ENCODE measurements at regions of chr2 and their contacts with region 1.

Region 1: DNA sequence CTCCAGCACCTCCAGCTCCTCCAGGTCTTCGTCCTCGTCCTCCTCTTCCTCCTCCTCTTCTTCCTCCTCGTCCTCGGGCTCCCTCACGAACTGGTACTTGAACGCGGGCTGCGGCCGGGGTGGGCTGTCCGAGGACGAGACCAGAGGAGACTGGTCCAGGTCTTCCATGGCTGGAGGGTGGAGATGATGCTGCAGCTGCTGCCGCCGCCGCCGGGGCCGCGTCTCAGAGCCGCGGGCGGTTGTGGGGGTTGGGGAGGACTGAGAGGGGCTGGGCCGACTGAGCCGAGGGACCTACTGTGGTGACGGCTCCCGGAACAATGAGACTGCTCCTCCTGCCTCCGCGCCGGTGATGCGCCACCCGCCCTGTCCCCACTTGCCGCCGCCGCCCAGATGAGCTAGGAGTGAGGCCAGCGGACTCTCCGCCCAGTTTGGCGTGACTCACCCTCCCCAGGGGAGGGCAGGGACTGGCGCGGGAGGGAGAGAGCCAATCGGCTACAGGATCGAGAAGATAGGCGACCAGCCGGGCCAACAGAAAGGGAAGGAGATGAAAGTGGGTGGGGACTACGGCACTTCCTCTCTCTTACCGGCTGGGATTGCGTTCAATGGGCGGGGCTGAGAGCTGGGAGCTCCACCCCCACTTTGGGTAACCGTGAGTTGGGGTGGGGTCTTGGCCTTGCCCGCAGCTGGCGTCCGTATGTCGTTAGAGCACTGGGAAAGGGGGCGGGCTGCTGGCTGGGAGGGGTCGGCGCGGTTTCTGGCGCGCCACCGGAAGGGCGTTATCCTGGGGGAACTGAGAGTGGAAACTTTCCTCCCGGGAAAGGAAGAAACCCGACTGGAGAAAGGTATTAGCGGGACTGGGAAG is at the start of gene RTN4:
- DNase-seq: peak; percentile 99
- H3K4me3 Mint-ChIP-seq: peak within 1 kb of the TSS; percentile 97
- H3K27ac Mint-ChIP-seq: peak within 1 kb of the TSS; percentile 97
- H3K4me1 Mint-ChIP-seq: peaks cover 58% of the 10 kb centered on the region
- H3K27me3 Mint-ChIP-seq: no peaks in the 10 kb centered on the region
- total RNA-seq, gene RTN4: 76.4 to 76.7 TPM

Region 2: GRCh38 chr2:53970724-53971602 is 1079.4 kb before region 1 on chr2 and contains the start of gene PSME4:
- CTCF ChIA-PET with region 1: no interaction called
- intact Hi-C with region 1: loop called (anchors 5 kb)
- DNase-seq: peak; percentile 95
- H3K4me3 Mint-ChIP-seq: peak within 1 kb of the TSS; percentile 83
- H3K27ac Mint-ChIP-seq: peak within 1 kb of the TSS; percentile 86
- H3K4me1 Mint-ChIP-seq: peaks cover 38% of the 10 kb centered on the region
- H3K27me3 Mint-ChIP-seq: no peaks in the 10 kb centered on the region
- total RNA-seq, gene PSME4: 31.5 to 38.8 TPM

Region 3: DNA sequence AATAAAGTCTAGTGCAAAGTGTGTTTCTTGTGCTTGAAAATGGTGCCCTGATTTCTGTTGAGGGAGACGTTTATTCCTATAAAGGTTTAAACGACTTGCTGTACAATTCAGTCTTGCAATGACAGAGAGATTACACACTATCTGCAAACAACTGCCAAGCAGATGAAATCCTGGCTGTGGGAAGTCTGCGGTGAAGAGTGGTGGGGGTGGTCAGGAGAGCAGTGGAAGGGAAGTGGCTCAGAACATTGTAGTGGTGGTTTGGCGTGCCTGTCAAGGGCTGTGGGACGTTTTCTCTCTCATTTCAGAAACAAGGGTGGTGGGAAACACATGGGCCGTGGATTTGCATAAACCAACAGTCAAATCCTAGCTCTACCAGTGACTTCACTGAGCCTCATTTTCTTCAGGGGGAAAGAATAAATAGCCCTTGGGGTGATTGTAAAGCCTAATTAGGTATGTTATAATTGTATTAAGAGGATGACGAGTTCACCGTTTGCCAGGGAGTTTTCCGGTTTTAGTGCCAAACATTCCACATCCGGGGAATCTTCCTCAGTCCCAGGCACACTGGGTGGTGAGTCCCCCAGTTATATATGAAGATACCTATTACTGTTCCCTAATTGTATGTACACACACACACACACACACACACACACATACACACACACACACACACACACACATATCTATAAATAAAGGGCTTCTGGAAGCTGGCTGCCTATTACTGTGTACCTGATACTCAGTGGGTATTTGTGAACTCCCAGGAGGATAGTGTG is 479.3 kb before region 1 on chr2:
- CTCF ChIA-PET with region 1: no interaction called
- intact Hi-C with region 1: loop called (anchors 1 kb)
- DNase-seq: peak; percentile 93
- H3K4me3 Mint-ChIP-seq: peak overlapping the region; percentile 48
- H3K27ac Mint-ChIP-seq: peak overlapping the region; percentile 91
- H3K4me1 Mint-ChIP-seq: peaks cover 87% of the 10 kb centered on the region
- H3K27me3 Mint-ChIP-seq: no peaks in the 10 kb centered on the region

Region 4: DNA sequence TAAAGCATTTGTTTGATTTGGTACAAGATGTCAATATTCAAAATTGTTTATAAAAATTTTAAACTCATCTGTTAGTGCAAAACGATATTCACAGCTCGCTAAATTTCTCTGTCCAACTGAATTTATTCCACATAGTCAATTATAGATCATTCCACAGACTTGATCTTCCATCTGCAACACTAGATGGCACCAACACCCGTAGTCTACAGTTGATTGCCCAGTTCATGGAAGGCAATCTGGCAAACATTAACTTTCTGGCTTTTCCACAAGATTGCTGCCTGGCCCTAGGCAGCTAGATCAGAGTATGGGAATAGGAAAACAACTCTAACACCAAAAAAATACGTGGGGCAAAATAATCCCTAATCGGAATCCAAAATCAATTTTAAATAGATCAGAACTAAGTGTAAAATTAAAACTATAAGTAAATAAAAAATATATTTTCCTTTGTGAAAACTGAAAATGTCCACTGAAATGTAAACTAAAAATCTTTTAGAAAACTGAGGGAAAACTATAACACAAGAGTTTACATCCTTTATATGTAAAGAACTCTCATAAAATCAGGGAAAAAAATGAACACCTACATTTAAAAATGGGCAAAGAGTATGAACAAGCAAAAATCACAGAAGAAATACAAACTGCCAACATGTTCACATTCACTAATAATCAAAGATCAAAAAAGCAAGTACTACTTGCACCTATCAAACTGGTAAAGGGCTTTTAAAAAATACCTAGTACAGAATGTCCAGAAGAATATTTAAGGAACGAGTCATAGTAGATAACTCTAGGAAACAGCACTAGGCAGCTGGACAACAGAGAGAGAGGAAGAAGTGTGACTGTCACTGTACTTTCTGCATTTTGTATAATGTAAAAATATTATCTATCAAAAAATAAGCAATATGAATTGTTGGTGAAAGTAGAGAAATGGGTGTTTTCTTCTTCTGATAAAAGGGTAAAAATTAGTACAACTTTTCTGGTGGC is 35.1 kb before region 1 on chr2:
- CTCF ChIA-PET with region 1: interaction called, 9 read pairs
- intact Hi-C with region 1: loop called (anchors 1 kb)
- DNase-seq: peak; percentile 60
- H3K4me3 Mint-ChIP-seq: no peak overlapping the region
- H3K27ac Mint-ChIP-seq: no peak overlapping the region
- H3K4me1 Mint-ChIP-seq: peaks cover 25% of the 10 kb centered on the region
- H3K27me3 Mint-ChIP-seq: no peaks in the 10 kb centered on the region

Region 5: GRCh38 chr2:55168221-55169154 is 118.1 kb after region 1 on chr2:
- CTCF ChIA-PET with region 1: interaction called, 8 read pairs
- intact Hi-C with region 1: loop called (anchors 1 kb)
- DNase-seq: peak; percentile 62
- H3K4me3 Mint-ChIP-seq: no peak overlapping the region
- H3K27ac Mint-ChIP-seq: no peak overlapping the region
- H3K4me1 Mint-ChIP-seq: peaks cover 3% of the 10 kb centered on the region
- H3K27me3 Mint-ChIP-seq: no peaks in the 10 kb centered on the region

Region 6: GRCh38 chr2:55419679-55420438 is 369.5 kb after region 1 on chr2 and contains the start of gene CCDC88A:
- CTCF ChIA-PET with region 1: no interaction called
- intact Hi-C with region 1: loop called (anchors 1 kb)
- DNase-seq: peak; percentile 89
- H3K4me3 Mint-ChIP-seq: peak within 1 kb of the TSS; percentile 86
- H3K27ac Mint-ChIP-seq: peak within 1 kb of the TSS; percentile 53
- H3K4me1 Mint-ChIP-seq: peaks cover 18% of the 10 kb centered on the region
- H3K27me3 Mint-ChIP-seq: peaks cover 10% of the 10 kb centered on the region
- total RNA-seq, gene CCDC88A: 9.7 to 10.7 TPM